PC-3 (cell line): ENCODE measurements at regions of chrX and their contacts with region 1.

Region 1: GRCh38 chrX:124217304-124218251 is 114.9 kb upstream of the TEX13D start:
- DNase-seq: peak; percentile 80
- ATAC-seq: peak; percentile 92
- H3K4me3 ChIP-seq: no peak overlapping the region
- H3K27ac ChIP-seq: peak overlapping the region; percentile 93
- H3K4me1 ChIP-seq: peaks cover 37% of the 10 kb centered on the region
- H3K27me3 ChIP-seq: no peaks in the 10 kb centered on the region
- CTCF ChIP-seq: no peak

Region 2: GRCh38 chrX:124239911-124240310 is 22.3 kb after region 1 on chrX:
- CTCF ChIA-PET with region 1: no interaction called
- POLR2A ChIA-PET with region 1: no interaction called
- intact Hi-C with region 1: loop called (anchors 2 kb)
- DNase-seq: no peak
- ATAC-seq: no peak
- H3K4me3 ChIP-seq: no peak overlapping the region
- H3K27ac ChIP-seq: no peak overlapping the region
- H3K4me1 ChIP-seq: peaks cover 10% of the 10 kb centered on the region
- H3K27me3 ChIP-seq: no peaks in the 10 kb centered on the region
- CTCF ChIP-seq: no peak

Region 3: DNA sequence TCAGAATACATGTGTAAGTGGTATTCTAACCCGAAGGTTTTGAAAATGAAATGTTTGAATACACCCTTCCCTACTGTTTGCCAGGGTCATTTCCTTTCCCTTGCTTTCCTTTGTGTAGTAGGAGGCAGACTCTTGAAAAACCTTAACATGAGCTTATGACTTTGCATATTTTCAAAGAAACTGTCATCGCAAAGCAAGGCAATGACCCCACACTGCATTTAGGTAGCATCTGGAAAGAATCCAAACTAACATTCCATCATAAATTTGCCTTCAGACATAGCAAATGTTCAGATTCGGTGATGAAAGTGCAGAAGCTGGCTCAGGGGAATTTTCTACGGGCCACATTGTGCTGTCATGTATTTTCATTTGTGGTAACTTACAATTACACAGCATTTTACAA is 161.1 kb after region 1 on chrX:
- CTCF ChIA-PET with region 1: no interaction called
- POLR2A ChIA-PET with region 1: no interaction called
- intact Hi-C with region 1: loop called (anchors 2 kb)
- DNase-seq: no peak
- ATAC-seq: no peak
- H3K4me3 ChIP-seq: no peak overlapping the region
- H3K27ac ChIP-seq: no peak overlapping the region
- H3K4me1 ChIP-seq: peaks cover 19% of the 10 kb centered on the region
- H3K27me3 ChIP-seq: no peaks in the 10 kb centered on the region
- CTCF ChIP-seq: no peak

Region 4: GRCh38 chrX:124476562-124476961 is 259.0 kb after region 1 on chrX:
- CTCF ChIA-PET with region 1: no interaction called
- POLR2A ChIA-PET with region 1: no interaction called
- intact Hi-C with region 1: no loop called
- DNase-seq: no peak
- ATAC-seq: no peak
- H3K4me3 ChIP-seq: no peak overlapping the region
- H3K27ac ChIP-seq: no peak overlapping the region
- H3K4me1 ChIP-seq: no peaks in the 10 kb centered on the region
- H3K27me3 ChIP-seq: no peaks in the 10 kb centered on the region
- CTCF ChIP-seq: no peak